ENCODE measurements at regions of chr10 and their contacts with region 1.

Region 1: GRCh38 chr10:102853944-102854694 is at the start of gene BORCS7:
- DNase-seq: peak; percentile 94
- ATAC-seq: peak; percentile 100
- H3K4me3 Mint-ChIP-seq: peak within 1 kb of the TSS; percentile 95
- H3K27ac Mint-ChIP-seq: peak within 1 kb of the TSS; percentile 99
- H3K4me1 Mint-ChIP-seq: peaks cover 14% of the 10 kb centered on the region
- H3K27me3 Mint-ChIP-seq: no peaks in the 10 kb centered on the region
- total RNA-seq, gene BORCS7: 4.5 to 5.1 TPM

Region 2: DNA sequence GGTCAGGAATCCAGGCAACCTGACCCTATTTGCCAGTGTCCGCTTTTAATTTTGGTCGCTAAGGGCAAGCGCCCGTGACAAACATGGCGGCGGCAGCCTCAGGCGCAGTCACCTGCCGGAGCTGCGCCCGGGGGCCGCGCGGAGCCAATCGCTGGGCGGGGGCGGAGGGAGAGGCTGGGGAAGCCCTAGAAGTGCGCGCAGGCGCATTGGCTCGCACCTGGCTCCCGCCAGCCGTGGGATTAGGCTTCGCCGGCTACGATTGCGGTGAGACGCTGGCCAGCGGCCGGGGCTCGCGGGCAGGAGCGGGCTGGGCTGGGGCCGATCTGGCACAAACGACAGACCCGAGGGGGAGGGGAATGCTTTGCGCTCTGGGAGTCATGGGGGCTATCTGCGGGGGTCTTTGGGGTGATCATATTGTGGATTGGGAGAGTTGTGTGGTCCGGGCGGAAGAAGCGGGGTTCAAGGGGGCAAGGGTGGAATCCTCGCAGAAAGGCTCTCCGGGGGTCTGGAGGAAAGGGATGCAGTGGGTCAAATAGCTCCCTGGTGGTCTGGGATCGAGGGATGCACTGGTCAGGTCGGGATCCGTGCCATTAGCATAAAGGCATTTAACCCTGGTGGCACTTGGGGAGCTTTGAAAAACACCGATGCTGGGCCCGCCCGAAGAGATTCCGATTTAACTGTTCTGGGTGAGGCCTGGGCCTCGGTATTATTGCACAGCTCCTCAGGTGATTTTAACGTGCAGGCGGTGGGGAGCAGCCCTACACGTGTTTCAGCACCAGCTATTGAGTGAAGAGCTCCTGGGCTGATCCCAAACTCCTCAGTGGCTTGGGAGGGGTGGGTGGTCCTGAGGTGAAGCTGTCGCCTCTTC is 392.7 kb before region 1 on chr10:
- CTCF ChIA-PET with region 1: no interaction called
- POLR2A ChIA-PET with region 1: no interaction called
- intact Hi-C with region 1: loop called in 1 of 2 experiments (anchors 1 kb)
- DNase-seq: peak; percentile 97
- ATAC-seq: peak; percentile 98
- H3K4me3 Mint-ChIP-seq: peak overlapping the region; percentile 85
- H3K27ac Mint-ChIP-seq: peak overlapping the region; percentile 73
- H3K4me1 Mint-ChIP-seq: peaks cover 27% of the 10 kb centered on the region
- H3K27me3 Mint-ChIP-seq: no peaks in the 10 kb centered on the region

Region 3: DNA sequence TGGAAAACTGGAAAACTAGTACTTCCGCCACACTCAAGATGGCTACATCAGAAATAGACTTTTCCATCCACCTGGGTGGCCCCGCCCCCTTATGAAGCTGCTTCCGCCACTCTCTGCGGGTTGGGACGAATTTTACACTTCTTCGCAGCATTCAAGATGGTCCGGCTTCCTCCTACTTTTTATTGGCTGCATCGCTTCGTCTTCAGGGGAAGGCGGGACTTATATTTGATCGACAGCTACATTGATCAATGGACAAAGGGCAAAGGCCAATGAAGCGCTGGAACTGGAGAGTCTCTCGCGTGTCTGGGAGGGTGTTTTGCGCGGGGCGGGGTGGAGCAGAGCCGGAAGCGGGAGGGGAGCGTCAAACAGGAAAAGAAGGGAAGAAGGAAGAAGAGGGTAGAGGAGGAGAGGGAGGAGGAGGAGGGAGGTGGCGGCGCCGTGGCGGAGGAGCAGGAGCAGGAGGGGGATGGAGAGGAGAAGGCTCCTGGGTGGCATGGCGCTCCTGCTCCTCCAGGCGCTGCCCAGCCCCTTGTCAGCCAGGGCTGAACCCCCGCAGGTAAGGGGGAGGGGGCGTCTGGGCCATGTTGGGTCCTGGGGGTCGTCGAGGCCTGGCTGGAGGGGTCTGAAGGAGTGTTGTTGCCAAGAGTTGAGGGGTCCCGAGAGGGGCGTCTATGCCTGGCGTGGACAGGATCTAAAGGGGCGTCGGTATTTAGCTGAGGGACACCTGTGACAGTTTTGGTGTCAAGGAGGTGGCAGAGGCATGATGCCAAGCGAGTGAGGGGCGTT is 110.3 kb before region 1 on chr10 and contains the start of gene WBP1L:
- CTCF ChIA-PET with region 1: no interaction called
- POLR2A ChIA-PET with region 1: no interaction called
- intact Hi-C with region 1: loop called (anchors 1 kb)
- DNase-seq: peak; percentile 96
- ATAC-seq: peak; percentile 98
- H3K4me3 Mint-ChIP-seq: peak within 1 kb of the TSS; percentile 92
- H3K27ac Mint-ChIP-seq: peak within 1 kb of the TSS; percentile 82
- H3K4me1 Mint-ChIP-seq: peaks cover 42% of the 10 kb centered on the region
- H3K27me3 Mint-ChIP-seq: no peaks in the 10 kb centered on the region
- total RNA-seq, gene WBP1L: 14.9 to 16.4 TPM

Region 4: GRCh38 chr10:103192451-103193106 is 338.5 kb after region 1 on chr10:
- CTCF ChIA-PET with region 1: no interaction called
- POLR2A ChIA-PET with region 1: no interaction called
- intact Hi-C with region 1: loop called in 1 of 2 experiments (anchors 1 kb)
- DNase-seq: peak; percentile 81
- ATAC-seq: peak; percentile 50
- H3K4me3 Mint-ChIP-seq: peak overlapping the region; percentile 95
- H3K27ac Mint-ChIP-seq: peak overlapping the region; percentile 99
- H3K4me1 Mint-ChIP-seq: peaks cover 44% of the 10 kb centered on the region
- H3K27me3 Mint-ChIP-seq: no peaks in the 10 kb centered on the region

Region 5: GRCh38 chr10:103367782-103368518 is 513.8 kb after region 1 on chr10 and contains the start of gene TAF5:
- CTCF ChIA-PET with region 1: no interaction called
- POLR2A ChIA-PET with region 1: no interaction called
- intact Hi-C with region 1: loop called in 1 of 2 experiments (anchors 1 kb)
- DNase-seq: peak; percentile 95
- ATAC-seq: peak; percentile 61
- H3K4me3 Mint-ChIP-seq: peak within 1 kb of the TSS; percentile 81
- H3K27ac Mint-ChIP-seq: peak within 1 kb of the TSS; percentile 85
- H3K4me1 Mint-ChIP-seq: peaks cover 16% of the 10 kb centered on the region
- H3K27me3 Mint-ChIP-seq: no peaks in the 10 kb centered on the region
- total RNA-seq, gene TAF5: 11.2 to 11.4 TPM

Measured in activated CD4-positive, alpha-beta T cell treated with anti-CD3 and anti-CD28 coated beads for 36 hours (primary cell).